Activated T-helper 1 cell treated with anti-CD3 and anti-CD28 coated beads, Interleukin-12 subunit alpha, Interleukin-12 subunit beta, Interleukin-2, Interleukin-4 antibody, amounts not matched to agents 30 ng/mL and 10 ng/mL and 1 ng/mL, durations not matched to agents 14 hours and 24 hours and 36 hours (primary cell): ENCODE measurements at regions of chr19 and their contacts with region 1.

Region 1: DNA sequence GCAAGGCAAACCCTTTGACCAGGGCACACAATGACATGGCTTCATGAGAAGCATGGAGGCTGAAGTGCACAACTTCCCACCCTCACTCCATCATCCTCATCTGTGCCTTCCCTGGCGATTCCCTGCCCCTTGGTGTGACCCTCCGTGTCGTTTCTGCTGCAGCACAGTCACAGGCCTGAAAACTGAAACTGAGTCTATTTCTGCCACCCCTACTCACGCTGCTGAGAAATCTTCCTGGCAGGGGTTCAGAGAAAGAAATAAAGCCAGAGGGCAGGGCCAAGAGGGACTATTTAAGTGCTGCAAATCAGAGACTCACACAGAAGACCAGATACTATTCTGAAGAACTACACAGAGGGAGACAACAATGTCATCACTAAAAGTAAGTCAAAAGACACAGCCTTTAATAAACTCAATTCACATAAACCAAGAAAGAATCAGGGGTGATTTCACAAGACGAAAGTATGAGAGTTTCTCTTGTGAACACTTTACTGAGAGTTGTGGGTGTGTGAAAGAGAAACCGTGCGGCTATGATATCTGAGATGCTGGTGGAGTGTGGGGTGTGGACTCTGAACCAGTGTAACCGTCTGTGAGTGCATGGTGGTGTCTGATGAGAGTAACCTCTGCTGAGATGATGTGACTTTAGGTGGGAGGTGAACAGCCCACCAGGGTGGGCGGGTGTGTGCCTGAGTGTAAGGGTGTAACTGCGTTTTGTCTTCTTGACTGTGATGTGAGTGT is 23.5 kb downstream of the LGALS16 start:
- DNase-seq: peak; percentile 34
- H3K4me3 Mint-ChIP-seq: peak overlapping the region; percentile 71
- H3K27ac Mint-ChIP-seq: peak overlapping the region; percentile 78
- H3K4me1 Mint-ChIP-seq: peaks cover 53% of the 10 kb centered on the region
- H3K27me3 Mint-ChIP-seq: no peaks in the 10 kb centered on the region

Region 2: GRCh38 chr19:39480337-39481228 is 198.6 kb before region 1 on chr19 and contains the start of gene TIMM50:
- intact Hi-C with region 1: loop called (anchors 2 kb)
- DNase-seq: peak; percentile 96
- H3K4me3 Mint-ChIP-seq: peak within 1 kb of the TSS; percentile 95
- H3K27ac Mint-ChIP-seq: peak within 1 kb of the TSS; percentile 94
- H3K4me1 Mint-ChIP-seq: peaks cover 28% of the 10 kb centered on the region
- H3K27me3 Mint-ChIP-seq: no peaks in the 10 kb centered on the region
- total RNA-seq, gene TIMM50: 121 and 127 TPM in 2 replicates

Region 3: GRCh38 chr19:39582891-39583625 is 96.2 kb before region 1 on chr19:
- intact Hi-C with region 1: loop called (anchors 1 kb)
- DNase-seq: no peak
- H3K4me3 Mint-ChIP-seq: no peak overlapping the region
- H3K27ac Mint-ChIP-seq: no peak overlapping the region
- H3K4me1 Mint-ChIP-seq: no peaks in the 10 kb centered on the region
- H3K27me3 Mint-ChIP-seq: peaks cover 8% of the 10 kb centered on the region

Region 4: DNA sequence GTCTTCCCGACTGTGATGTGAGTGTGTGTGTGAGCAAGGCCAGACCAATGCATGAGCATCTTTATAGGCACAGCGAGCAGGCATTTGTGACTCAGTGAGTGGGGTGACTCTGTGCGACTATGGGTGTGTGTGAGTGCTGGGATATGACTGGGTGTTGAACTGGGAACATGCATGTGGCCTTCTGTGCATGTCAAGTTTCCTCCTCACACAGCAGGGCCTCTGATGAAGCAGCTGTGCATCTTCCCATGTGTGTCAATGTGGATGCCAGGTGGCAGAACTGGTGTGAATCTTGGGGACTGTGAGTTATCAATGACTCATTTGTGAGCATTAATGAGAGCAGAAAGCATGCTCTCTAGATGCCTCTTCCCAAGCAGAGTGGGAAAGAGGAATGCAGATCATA is 12.9 kb after region 1 on chr19:
- intact Hi-C with region 1: no loop called
- DNase-seq: no peak
- H3K4me3 Mint-ChIP-seq: no peak overlapping the region
- H3K27ac Mint-ChIP-seq: no peak overlapping the region
- H3K4me1 Mint-ChIP-seq: peaks cover 4% of the 10 kb centered on the region
- H3K27me3 Mint-ChIP-seq: peaks cover 4% of the 10 kb centered on the region

Region 5: DNA sequence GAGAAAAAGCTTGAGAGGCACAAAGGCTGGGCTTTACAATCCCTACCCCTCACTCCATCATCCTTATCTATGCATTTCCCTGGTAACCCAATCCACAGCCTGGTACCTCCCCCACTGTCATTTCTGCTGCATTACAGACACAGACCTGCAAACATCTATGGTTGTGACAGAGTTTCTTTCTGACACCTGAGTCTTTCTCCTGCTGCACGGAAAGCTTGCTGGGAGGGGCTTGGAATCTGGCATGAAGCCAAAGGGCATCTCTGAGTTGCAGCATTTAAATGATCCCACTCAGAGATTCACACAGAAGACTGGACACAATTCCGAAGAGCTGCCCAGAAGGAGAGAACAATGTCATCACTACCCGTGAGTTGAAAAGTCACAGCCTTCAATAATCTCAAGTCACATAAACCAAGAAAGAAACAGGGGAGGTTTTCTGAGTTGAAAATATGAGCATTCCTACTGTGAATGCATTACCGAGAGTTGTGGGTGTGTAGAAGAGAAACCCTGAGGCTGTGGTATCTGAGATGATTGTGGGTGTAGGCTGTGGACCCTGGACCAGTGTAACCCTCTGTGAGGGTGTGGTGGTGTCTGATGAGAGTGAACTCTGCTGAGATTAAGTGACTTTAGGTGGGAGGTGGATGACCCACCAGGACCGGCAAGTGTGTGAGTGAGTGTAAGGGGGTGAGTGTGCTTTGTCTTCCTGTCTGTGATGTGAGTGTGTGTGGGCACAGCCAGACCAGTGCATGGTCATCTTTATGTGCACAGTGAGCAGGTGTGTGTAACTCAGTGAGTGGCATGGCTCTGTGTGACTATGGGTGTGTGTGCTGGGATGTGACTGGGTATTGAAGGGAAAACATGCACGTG is 25.2 kb after region 1 on chr19 and contains the start of gene LGALS14:
- intact Hi-C with region 1: loop called (anchors 1 kb)
- DNase-seq: no peak
- H3K4me3 Mint-ChIP-seq: peak within 1 kb of the TSS; percentile 53
- H3K27ac Mint-ChIP-seq: peak within 1 kb of the TSS; percentile 88
- H3K4me1 Mint-ChIP-seq: peaks cover 34% of the 10 kb centered on the region
- H3K27me3 Mint-ChIP-seq: no peaks in the 10 kb centered on the region
- total RNA-seq, gene LGALS14: 0.56 TPM in 1 of 2 replicates, not detected in the other

Region 6: DNA sequence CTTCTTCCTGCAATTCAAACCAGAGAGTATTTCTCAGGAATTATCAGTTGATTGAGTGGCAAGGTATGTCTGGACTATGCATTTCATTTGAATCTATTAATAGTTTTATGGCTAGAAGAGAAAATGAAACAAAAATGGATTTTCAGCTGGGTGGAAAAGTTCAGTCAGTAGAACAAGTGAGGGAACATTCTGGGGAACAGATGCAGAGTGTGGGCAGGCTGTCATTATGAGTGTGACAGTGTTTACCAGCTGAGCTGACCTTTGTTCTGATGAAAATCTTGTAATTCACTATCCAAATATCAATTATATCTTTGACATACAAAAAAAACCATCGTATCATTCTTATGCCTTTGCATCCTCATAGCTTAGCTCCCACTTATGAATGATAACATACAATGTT is 61.2 kb after region 1 on chr19:
- intact Hi-C with region 1: loop called (anchors 1 kb)
- DNase-seq: no peak
- H3K4me3 Mint-ChIP-seq: peak overlapping the region; percentile 75
- H3K27ac Mint-ChIP-seq: peak overlapping the region; percentile 87
- H3K4me1 Mint-ChIP-seq: peaks cover 47% of the 10 kb centered on the region
- H3K27me3 Mint-ChIP-seq: peaks cover 6% of the 10 kb centered on the region

Region 7: GRCh38 chr19:39765091-39766076 is 86.2 kb after region 1 on chr19:
- intact Hi-C with region 1: loop called (anchors 1 kb)
- DNase-seq: no peak
- H3K4me3 Mint-ChIP-seq: no peak overlapping the region
- H3K27ac Mint-ChIP-seq: no peak overlapping the region
- H3K4me1 Mint-ChIP-seq: no peaks in the 10 kb centered on the region
- H3K27me3 Mint-ChIP-seq: peaks cover 11% of the 10 kb centered on the region